ENCODE measurements at regions of chr2 and their contacts with region 1.

Region 1: GRCh38 chr2:43556256-43556655 is 39.6 kb downstream of the THADA start:
- DNase-seq: no peak
- ATAC-seq: no peak
- H3K4me3 ChIP-seq: no peak overlapping the region
- H3K27ac ChIP-seq: no peak overlapping the region
- H3K4me1 ChIP-seq: no peaks in the 10 kb centered on the region
- H3K27me3 ChIP-seq: no peaks in the 10 kb centered on the region
- CTCF ChIP-seq: no peak

Region 2: GRCh38 chr2:43495727-43496126 is 60.5 kb before region 1 on chr2:
- CTCF ChIA-PET with region 1: no interaction called
- POLR2A ChIA-PET with region 1: interaction called, 11 read pairs
- in situ Hi-C with region 1: no loop called
- intact Hi-C with region 1: no loop called
- DNase-seq: no peak
- ATAC-seq: no peak
- H3K4me3 ChIP-seq: no peak overlapping the region
- H3K27ac ChIP-seq: no peak overlapping the region
- H3K4me1 ChIP-seq: no peaks in the 10 kb centered on the region
- H3K27me3 ChIP-seq: no peaks in the 10 kb centered on the region
- CTCF ChIP-seq: no peak

Region 3: DNA sequence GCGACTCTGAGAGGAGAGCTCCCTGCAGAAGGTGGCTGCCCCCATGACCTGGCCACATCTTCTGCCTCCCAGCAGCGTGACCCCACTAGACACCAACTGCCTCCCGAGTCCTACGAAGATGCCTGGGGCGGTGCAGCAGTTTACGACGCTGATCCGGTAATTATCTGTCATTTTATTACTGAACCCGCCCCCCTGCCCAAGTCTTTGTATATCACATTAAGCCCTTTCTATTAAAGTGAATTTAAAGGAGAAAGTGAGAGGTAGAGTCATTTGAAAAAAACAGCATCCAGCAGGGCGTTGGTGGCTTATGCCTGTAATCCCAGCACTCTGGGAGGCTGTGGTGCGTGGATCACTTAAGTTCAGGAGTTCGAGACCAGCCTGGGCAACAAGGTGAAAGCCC is 315.9 kb after region 1 on chr2:
- CTCF ChIA-PET with region 1: no interaction called
- POLR2A ChIA-PET with region 1: no interaction called
- in situ Hi-C with region 1: no loop called
- intact Hi-C with region 1: no loop called
- DNase-seq: no peak
- ATAC-seq: no peak
- H3K4me3 ChIP-seq: no peak overlapping the region
- H3K27ac ChIP-seq: no peak overlapping the region
- H3K4me1 ChIP-seq: no peaks in the 10 kb centered on the region
- H3K27me3 ChIP-seq: peaks cover 18% of the 10 kb centered on the region
- CTCF ChIP-seq: no peak

Region 4: DNA sequence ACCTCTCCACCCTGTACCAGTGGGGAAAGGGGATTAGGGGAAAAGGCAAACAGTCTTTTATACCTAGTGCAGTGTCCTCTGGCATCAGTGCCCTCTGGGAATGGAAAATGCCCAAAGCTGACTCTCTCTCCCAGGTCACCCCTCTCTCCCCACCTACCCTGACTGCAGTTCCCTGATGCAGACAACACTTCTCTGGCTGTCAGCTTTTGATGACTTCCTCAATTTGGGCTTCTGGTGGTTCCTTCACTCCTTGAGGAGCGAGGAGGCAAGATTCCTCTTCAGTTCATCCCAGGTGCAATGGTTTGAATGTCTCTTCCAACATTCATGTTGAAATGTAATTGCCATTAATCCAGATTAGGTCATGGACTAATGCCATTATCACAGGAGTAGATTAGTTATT is 592.7 kb after region 1 on chr2:
- CTCF ChIA-PET with region 1: no interaction called
- POLR2A ChIA-PET with region 1: interaction called, 12 read pairs
- in situ Hi-C with region 1: no loop called
- intact Hi-C with region 1: no loop called
- DNase-seq: no peak
- ATAC-seq: no peak
- H3K4me3 ChIP-seq: no peak overlapping the region
- H3K27ac ChIP-seq: no peak overlapping the region
- H3K4me1 ChIP-seq: no peaks in the 10 kb centered on the region
- H3K27me3 ChIP-seq: no peaks in the 10 kb centered on the region
- CTCF ChIP-seq: no peak

Measured in Panc1 (cell line).